ENCODE measurements at regions of chr5 and their contacts with region 1.

Region 1: DNA sequence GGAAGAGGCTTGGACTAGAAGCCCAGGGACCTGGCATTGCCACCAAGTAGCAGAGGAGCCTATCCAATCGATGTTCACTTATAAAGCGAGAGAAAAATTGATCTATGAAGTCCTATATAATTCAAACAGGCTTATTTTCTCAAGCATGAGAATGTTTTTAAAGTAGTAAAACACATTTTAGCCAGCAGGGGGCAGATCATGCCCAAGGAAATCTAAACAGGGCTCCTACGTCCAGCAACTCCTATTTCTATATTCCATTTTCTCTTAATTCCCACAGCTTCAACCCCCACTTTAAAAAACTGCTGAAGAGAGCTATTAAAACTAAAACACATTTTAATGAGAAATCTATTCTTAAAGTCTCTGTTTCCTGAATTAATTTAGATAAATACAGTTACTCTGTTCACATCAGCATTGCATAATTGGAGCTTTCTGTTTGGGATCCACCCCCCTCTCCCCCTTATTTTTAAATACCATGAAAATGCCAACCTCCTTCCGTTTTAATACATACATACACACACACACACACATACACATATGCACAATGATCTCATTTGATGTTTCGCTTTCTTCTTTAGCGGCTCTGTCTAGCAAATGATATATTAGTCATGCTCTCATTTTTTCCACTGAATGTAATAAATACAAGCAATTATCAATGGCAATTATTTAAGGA is 144.9 kb downstream of the MYO10 start:
- DNase-seq: peak; percentile 63
- H3K4me3 Mint-ChIP-seq: no peak overlapping the region
- H3K27ac Mint-ChIP-seq: no peak overlapping the region
- H3K4me1 Mint-ChIP-seq: peaks cover 31% of the 10 kb centered on the region
- H3K27me3 Mint-ChIP-seq: no peaks in the 10 kb centered on the region
- CTCF ChIP-seq: peak; percentile 52

Region 2: GRCh38 chr5:16776611-16777251 is 14.4 kb before region 1 on chr5:
- CTCF ChIA-PET with region 1: interaction called, 11 read pairs
- POLR2A ChIA-PET with region 1: no interaction called
- intact Hi-C with region 1: no loop called
- DNase-seq: no peak
- H3K4me3 Mint-ChIP-seq: no peak overlapping the region
- H3K27ac Mint-ChIP-seq: no peak overlapping the region
- H3K4me1 Mint-ChIP-seq: no peaks in the 10 kb centered on the region
- H3K27me3 Mint-ChIP-seq: no peaks in the 10 kb centered on the region
- CTCF ChIP-seq: no peak

Region 3: DNA sequence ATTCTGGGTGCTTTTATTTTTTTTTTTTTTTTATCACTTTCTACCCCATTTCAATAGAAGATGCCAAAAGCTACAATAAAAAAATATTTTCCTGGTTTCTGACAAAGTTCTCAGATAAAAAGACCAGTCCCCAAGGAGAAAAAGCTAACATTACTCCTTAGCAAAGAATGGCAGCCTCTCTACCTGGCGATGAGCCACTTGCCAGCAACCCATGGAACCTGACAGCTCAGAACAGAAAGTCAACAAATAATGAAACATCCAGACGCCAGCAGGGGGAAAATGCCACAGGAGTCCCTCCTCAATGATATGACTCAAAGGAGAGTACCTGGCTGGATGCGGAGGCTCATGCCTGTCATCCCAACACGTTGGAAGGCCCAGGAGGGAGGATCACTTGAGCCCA is 21.7 kb after region 1 on chr5:
- CTCF ChIA-PET with region 1: interaction called, 12 read pairs
- POLR2A ChIA-PET with region 1: no interaction called
- intact Hi-C with region 1: no loop called
- DNase-seq: peak; percentile 69
- H3K4me3 Mint-ChIP-seq: no peak overlapping the region
- H3K27ac Mint-ChIP-seq: peak overlapping the region; percentile 38
- H3K4me1 Mint-ChIP-seq: peaks cover 35% of the 10 kb centered on the region
- H3K27me3 Mint-ChIP-seq: no peaks in the 10 kb centered on the region
- CTCF ChIP-seq: no peak

Region 4: DNA sequence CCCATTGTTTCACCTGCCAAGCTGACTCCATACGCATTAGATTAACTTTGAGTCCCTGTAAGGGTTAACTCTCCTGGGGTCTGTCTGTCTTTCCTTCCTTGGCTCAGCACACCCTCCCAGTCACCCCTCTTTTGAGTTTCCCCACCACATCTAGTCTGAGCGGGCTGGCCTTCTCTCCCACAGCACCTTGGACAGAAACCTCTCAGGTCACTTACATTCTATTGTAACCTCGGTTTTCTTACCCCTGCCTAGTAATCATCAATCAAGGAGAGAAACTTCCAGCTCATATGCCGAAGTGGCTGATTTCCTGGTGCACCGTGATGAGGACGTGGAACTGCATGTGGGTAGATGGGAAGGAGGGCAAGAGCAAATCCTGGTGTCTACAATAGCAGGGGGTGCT is 42.9 kb after region 1 on chr5:
- CTCF ChIA-PET with region 1: no interaction called
- POLR2A ChIA-PET with region 1: no interaction called
- intact Hi-C with region 1: no loop called
- DNase-seq: no peak
- H3K4me3 Mint-ChIP-seq: no peak overlapping the region
- H3K27ac Mint-ChIP-seq: no peak overlapping the region
- H3K4me1 Mint-ChIP-seq: peaks cover 6% of the 10 kb centered on the region
- H3K27me3 Mint-ChIP-seq: no peaks in the 10 kb centered on the region
- CTCF ChIP-seq: no peak

Region 5: GRCh38 chr5:16916262-16916865 is 125.2 kb after region 1 on chr5:
- CTCF ChIA-PET with region 1: interaction called, 10 read pairs
- POLR2A ChIA-PET with region 1: interaction called, 4 read pairs
- intact Hi-C with region 1: no loop called
- DNase-seq: peak; percentile 93
- H3K4me3 Mint-ChIP-seq: peak overlapping the region; percentile 54
- H3K27ac Mint-ChIP-seq: peak overlapping the region; percentile 81
- H3K4me1 Mint-ChIP-seq: peaks cover 43% of the 10 kb centered on the region
- H3K27me3 Mint-ChIP-seq: no peaks in the 10 kb centered on the region
- CTCF ChIP-seq: no peak

Region 6: DNA sequence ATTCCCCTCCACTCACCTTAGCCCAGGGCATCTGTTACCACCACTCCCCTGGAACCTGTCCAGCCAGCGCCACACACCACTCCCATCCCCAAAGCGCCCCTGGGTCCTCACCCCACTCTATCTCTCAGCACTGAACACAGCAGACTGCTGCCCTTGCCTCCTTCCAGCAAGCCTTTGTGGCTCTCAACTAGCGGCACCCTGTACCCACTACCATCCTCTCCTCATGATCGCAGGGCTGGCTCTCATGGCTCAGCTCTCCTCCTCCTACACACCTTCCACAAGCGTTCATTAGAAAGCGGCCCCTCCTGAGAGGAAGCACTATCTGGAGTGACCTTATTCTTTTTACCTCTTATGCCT is 412.9 kb after region 1 on chr5:
- CTCF ChIA-PET with region 1: interaction called, 15 read pairs
- POLR2A ChIA-PET with region 1: no interaction called
- intact Hi-C with region 1: no loop called
- DNase-seq: no peak
- H3K4me3 Mint-ChIP-seq: no peak overlapping the region
- H3K27ac Mint-ChIP-seq: no peak overlapping the region
- H3K4me1 Mint-ChIP-seq: no peaks in the 10 kb centered on the region
- H3K27me3 Mint-ChIP-seq: peaks cover 12% of the 10 kb centered on the region
- CTCF ChIP-seq: no peak